ENCODE measurements at regions of chr14 and their contacts with region 1.

Region 1: DNA sequence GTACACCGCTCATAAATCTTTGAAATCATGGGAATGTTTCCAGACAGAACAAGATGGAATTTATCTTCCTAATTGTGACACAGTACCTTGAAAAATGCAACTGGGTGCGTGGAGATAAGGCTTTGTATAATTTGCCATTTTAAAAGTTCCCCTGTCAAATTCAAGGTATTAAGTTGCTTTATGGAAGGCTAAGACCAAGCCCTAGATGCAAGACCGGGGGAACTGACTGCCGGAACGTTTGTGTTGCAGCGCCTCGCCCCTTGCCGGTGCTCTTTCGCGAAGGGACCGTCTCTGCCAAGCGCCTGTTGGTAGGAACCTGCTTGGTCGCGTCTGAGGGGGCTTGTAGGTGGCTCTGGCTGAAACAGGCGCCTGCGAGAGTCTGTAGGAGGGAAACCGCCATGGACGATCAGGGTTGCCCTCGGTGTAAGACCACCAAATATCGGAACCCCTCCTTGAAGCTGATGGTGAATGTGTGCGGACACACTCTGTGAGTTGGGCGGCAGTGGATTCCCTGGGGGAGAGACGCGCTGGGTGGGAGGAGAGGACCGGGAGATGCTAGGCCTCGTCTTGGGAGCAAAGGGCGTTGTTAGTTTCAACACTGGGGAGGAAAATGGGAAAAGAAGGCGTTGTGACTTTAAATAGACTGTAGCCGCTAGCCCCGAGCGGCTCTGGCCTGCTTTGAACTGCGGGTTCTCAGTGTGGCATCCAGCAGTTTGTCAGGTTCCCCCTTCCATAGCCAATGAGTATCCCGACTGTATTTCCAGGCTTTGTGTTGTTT is at the start of gene MNAT1:
- DNase-seq: peak; percentile 80
- H3K4me3 ChIP-seq: peak within 1 kb of the TSS; percentile 84 to 89 (median 85)
- H3K27ac ChIP-seq: peak within 1 kb of the TSS; percentile 70
- H3K4me1 ChIP-seq: peaks cover 2% of the 10 kb centered on the region
- H3K27me3 ChIP-seq: no peaks in the 10 kb centered on the region
- CTCF ChIP-seq: peak in 1 of 2 donors; percentile 18
- total RNA-seq, gene MNAT1: 61.5 to 68.4 TPM

Region 2: DNA sequence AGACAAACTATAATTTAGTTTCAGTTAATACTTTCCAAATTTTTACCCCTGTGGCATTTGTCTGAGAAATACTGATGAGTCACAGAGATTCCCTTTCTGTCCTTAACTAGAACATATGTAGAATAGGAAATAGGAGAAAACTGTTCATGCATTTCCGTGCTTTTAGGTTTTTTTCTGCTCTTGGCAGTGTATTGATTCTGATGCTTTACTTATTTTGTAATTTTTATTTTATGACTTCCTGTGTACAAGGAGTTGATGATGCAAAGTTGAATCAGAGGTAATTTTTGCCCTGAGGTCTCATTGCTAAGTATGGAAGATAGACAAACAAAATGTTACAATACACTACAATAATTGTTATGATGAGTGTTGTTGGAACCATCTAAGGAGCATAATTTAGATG is 23.0 kb after region 1 on chr14:
- CTCF ChIA-PET with region 1: no interaction called
- dilution Hi-C with region 1: no loop called
- in situ Hi-C with region 1: no loop called
- intact Hi-C with region 1: loop called (anchors 1 kb)
- DNase-seq: peak; percentile 82
- H3K4me3 ChIP-seq: peak overlapping the region in 1 of 3 experiments; percentile 19
- H3K27ac ChIP-seq: peak overlapping the region; percentile 84
- H3K4me1 ChIP-seq: peaks cover 49% of the 10 kb centered on the region
- H3K27me3 ChIP-seq: no peaks in the 10 kb centered on the region
- CTCF ChIP-seq: no peak

Region 3: GRCh38 chr14:60777856-60778578 is 43.4 kb after region 1 on chr14:
- CTCF ChIA-PET with region 1: no interaction called
- dilution Hi-C with region 1: no loop called
- in situ Hi-C with region 1: no loop called
- intact Hi-C with region 1: loop called (anchors 5 kb)
- DNase-seq: peak; percentile 72
- H3K4me3 ChIP-seq: no peak overlapping the region
- H3K27ac ChIP-seq: peak overlapping the region; percentile 18
- H3K4me1 ChIP-seq: peaks cover 35% of the 10 kb centered on the region
- H3K27me3 ChIP-seq: no peaks in the 10 kb centered on the region
- CTCF ChIP-seq: no peak

Region 4: DNA sequence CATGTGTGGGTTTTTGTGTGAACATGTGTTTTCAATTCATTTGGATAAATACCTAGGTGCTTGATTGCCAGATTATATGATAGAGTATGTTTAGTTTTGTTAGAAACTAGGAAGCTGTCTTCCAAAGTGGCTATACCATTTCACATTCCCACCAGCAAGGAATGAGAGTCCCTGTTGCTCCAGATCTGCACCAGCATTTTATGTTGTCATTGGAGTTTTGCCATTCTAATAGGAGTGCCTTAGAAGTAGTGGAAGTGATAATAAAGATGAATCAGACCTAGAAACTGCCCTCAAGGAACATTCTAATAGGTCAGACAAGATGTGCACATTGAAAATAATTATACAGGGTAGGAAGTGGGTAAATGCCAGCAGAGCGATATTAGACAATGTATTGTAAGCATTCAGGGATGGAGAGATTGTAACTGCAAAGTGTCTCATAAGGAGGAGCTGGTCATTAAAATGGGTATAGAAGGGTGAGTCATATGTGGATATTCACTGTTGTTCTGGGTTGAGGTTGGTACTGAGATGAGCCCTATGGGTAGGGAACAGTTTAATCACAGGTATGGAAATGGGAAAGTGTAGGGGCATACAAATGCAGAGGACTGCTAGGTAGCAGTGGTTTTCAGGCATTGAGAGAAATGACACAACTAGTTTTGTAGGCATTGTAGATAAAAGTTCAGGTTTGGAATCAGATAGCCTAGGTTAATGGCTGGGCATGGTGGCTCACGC is 71.4 kb after region 1 on chr14:
- CTCF ChIA-PET with region 1: interaction called, 3 read pairs
- dilution Hi-C with region 1: no loop called
- in situ Hi-C with region 1: no loop called
- intact Hi-C with region 1: loop called (anchors 1 kb)
- DNase-seq: peak; percentile 87
- H3K4me3 ChIP-seq: no peak overlapping the region
- H3K27ac ChIP-seq: no peak overlapping the region
- H3K4me1 ChIP-seq: peaks cover 12% of the 10 kb centered on the region
- H3K27me3 ChIP-seq: no peaks in the 10 kb centered on the region
- CTCF ChIP-seq: no peak

Region 5: DNA sequence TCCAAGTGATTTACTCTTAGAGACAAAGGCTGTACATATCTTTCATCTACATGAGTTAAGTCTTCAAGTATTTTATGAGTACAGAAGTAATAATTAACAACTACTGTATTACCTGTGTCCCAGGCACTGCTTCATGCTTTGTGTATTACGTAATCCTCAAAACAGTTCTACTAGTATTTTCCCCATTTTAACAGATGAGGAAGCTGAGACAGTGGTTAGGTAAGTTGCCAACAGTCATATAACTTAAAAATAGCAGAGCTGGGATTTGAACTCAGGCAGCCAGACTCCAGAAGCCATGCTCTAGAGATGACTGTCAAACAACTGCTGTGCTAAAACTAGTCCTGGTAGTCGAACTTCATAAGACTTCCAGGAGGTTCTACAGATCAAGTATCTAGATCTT is 235.5 kb after region 1 on chr14:
- CTCF ChIA-PET with region 1: no interaction called
- dilution Hi-C with region 1: no loop called
- in situ Hi-C with region 1: no loop called
- intact Hi-C with region 1: no loop called
- DNase-seq: no peak
- H3K4me3 ChIP-seq: no peak overlapping the region
- H3K27ac ChIP-seq: no peak overlapping the region
- H3K4me1 ChIP-seq: peaks cover 15% of the 10 kb centered on the region
- H3K27me3 ChIP-seq: no peaks in the 10 kb centered on the region
- CTCF ChIP-seq: no peak

Measured in mammary epithelial cell (primary cell).